ENCODE measurements at regions of chr1 and their contacts with region 1.

Region 1: DNA sequence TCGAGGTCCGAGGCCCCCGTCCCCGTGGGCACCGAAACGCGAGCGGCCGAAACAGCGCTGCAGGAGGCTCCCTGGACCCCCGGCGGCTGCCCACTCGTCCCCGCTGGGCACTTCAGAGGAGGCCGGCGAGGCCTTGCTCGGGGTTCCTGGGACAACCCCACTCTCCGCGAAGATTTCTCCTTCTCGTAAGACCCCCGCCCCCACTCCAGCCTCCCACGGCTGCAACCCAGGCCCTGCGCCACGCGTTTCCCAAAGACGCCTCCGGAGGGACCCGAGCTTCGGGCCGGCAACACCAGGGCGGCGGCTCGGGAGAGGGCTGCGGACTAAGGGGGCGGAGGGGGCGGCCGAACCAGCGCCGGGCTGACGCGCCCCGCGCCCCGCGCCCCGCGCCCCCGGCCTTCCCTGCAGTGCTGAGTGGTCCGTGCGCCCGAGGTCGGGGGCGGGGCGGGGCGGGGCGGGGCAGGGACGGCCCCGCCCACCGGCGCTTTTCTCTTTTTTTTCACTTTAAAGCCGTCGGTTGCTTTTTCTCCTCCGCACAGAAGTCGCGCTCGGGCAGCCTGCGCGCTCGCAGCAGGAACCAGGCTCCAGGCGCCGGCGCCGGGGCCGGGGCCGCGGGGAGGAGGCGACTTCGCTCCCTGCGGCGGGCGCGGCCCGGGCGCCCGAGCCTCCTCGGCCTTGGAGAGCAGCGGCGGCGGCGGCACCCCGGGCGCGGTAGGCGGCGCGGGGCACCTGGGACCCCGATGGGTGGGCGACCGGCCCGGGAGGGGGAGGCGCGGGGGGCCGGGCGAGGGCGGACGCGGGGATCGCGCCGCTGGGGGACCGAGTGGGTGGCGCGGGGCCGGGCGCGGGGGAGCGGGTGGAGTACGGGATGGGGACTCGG is at the start of gene SPSB1:
- DNase-seq: peak; percentile 84
- ATAC-seq: peak; percentile 40
- H3K4me3 Mint-ChIP-seq: peak within 1 kb of the TSS; percentile 39
- H3K27ac Mint-ChIP-seq: no peak within 1 kb of the TSS
- H3K4me1 Mint-ChIP-seq: peaks cover 11% of the 10 kb centered on the region
- H3K27me3 Mint-ChIP-seq: no peaks in the 10 kb centered on the region
- total RNA-seq, gene SPSB1: 5.7 to 6.8 TPM

Region 2: GRCh38 chr1:8482979-8483391 is 809.6 kb before region 1 on chr1:
- CTCF ChIA-PET with region 1: no interaction called
- POLR2A ChIA-PET with region 1: no interaction called
- intact Hi-C with region 1: no loop called
- DNase-seq: no peak
- ATAC-seq: no peak
- H3K4me3 Mint-ChIP-seq: no peak overlapping the region
- H3K27ac Mint-ChIP-seq: no peak overlapping the region
- H3K4me1 Mint-ChIP-seq: peaks cover 9% of the 10 kb centered on the region
- H3K27me3 Mint-ChIP-seq: no peaks in the 10 kb centered on the region

Region 3: DNA sequence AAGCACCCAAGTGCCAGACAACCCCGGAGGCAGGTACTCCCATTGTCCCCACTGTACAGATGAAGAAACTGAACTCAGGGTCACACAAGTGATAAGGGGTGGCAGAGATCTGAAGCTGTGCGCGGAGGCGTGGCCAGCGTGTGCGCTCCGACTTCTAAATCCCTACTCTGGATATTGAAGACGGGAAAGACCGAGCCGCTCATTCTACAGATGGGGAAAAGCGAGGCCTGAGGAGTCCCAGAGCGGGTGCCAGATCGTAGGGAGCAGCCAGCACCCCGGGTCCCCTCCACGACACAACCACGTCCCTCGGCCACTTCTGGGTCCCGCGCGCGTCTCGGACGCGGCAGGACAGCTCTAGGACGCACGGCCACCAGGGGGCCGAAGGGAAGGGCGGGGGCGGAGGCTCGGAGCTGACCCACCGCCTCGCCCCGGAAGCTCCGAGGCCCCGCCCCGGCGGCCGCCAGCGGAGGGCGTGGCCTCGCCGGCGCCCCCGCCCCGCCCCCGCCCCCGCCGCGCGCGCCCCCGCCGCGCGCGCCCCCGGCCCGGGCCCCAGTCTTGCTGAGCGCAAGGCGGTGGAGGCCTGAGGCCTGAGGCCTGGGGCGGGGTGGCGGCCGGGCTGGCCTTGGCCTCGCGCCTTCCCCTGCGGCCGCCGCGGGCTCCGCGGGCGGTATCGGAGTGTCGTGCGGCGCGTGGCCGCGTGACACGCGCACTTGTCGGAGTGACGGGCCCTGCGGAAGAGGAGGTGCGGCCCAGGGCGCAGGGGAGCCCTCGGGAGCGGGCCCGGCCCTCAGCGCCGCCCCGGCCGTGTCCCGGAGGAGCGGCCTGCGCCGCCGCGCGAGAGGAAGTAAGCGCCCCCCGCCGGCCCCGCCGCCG is 58.1 kb before region 1 on chr1 and contains the start of gene H6PD:
- CTCF ChIA-PET with region 1: interaction called, 4 read pairs
- POLR2A ChIA-PET with region 1: no interaction called
- intact Hi-C with region 1: loop called in 1 of 2 experiments (anchors 1 kb)
- DNase-seq: peak; percentile 80
- ATAC-seq: peak; percentile 76
- H3K4me3 Mint-ChIP-seq: peak within 1 kb of the TSS; percentile 82
- H3K27ac Mint-ChIP-seq: peak within 1 kb of the TSS; percentile 90
- H3K4me1 Mint-ChIP-seq: peaks cover 41% of the 10 kb centered on the region
- H3K27me3 Mint-ChIP-seq: no peaks in the 10 kb centered on the region
- total RNA-seq, gene H6PD: 8.8 to 9.6 TPM

Region 4: GRCh38 chr1:9281908-9282695 is 10.5 kb before region 1 on chr1:
- CTCF ChIA-PET with region 1: interaction called, 21 read pairs
- POLR2A ChIA-PET with region 1: interaction called, 3 read pairs
- intact Hi-C with region 1: loop called in 1 of 2 experiments (anchors 1 kb)
- DNase-seq: peak; percentile 27
- ATAC-seq: no peak
- H3K4me3 Mint-ChIP-seq: no peak overlapping the region
- H3K27ac Mint-ChIP-seq: no peak overlapping the region
- H3K4me1 Mint-ChIP-seq: peaks cover 43% of the 10 kb centered on the region
- H3K27me3 Mint-ChIP-seq: no peaks in the 10 kb centered on the region

Region 5: GRCh38 chr1:9428601-9429341 is 136.2 kb after region 1 on chr1:
- CTCF ChIA-PET with region 1: interaction called, 4 read pairs
- POLR2A ChIA-PET with region 1: interaction called, 5 read pairs
- intact Hi-C with region 1: loop called in 1 of 2 experiments (anchors 1 kb)
- DNase-seq: peak; percentile 100
- ATAC-seq: peak; percentile 91
- H3K4me3 Mint-ChIP-seq: peak overlapping the region; percentile 86
- H3K27ac Mint-ChIP-seq: peak overlapping the region; percentile 98
- H3K4me1 Mint-ChIP-seq: peaks cover 47% of the 10 kb centered on the region
- H3K27me3 Mint-ChIP-seq: no peaks in the 10 kb centered on the region

Region 6: GRCh38 chr1:9494929-9495758 is 202.5 kb after region 1 on chr1:
- CTCF ChIA-PET with region 1: interaction called, 79 read pairs
- POLR2A ChIA-PET with region 1: no interaction called
- intact Hi-C with region 1: loop called (anchors 1 kb)
- DNase-seq: peak; percentile 84
- ATAC-seq: peak; percentile 90
- H3K4me3 Mint-ChIP-seq: peak overlapping the region; percentile 57
- H3K27ac Mint-ChIP-seq: no peak overlapping the region
- H3K4me1 Mint-ChIP-seq: peaks cover 7% of the 10 kb centered on the region
- H3K27me3 Mint-ChIP-seq: peaks cover 7% of the 10 kb centered on the region

Region 7: GRCh38 chr1:9823943-9824701 is 531.5 kb after region 1 on chr1 and contains the start of gene CLSTN1:
- CTCF ChIA-PET with region 1: no interaction called
- POLR2A ChIA-PET with region 1: no interaction called
- intact Hi-C with region 1: loop called in 1 of 2 experiments (anchors 5 kb)
- DNase-seq: peak; percentile 96
- ATAC-seq: peak; percentile 72
- H3K4me3 Mint-ChIP-seq: peak within 1 kb of the TSS; percentile 96
- H3K27ac Mint-ChIP-seq: peak within 1 kb of the TSS; percentile 89
- H3K4me1 Mint-ChIP-seq: peaks cover 35% of the 10 kb centered on the region
- H3K27me3 Mint-ChIP-seq: peaks cover 9% of the 10 kb centered on the region
- total RNA-seq, gene CLSTN1: 34.9 to 36.7 TPM

Region 8: GRCh38 chr1:9929431-9930385 is 637.1 kb after region 1 on chr1:
- CTCF ChIA-PET with region 1: no interaction called
- POLR2A ChIA-PET with region 1: no interaction called
- intact Hi-C with region 1: no loop called
- DNase-seq: no peak
- ATAC-seq: no peak
- H3K4me3 Mint-ChIP-seq: no peak overlapping the region
- H3K27ac Mint-ChIP-seq: no peak overlapping the region
- H3K4me1 Mint-ChIP-seq: no peaks in the 10 kb centered on the region
- H3K27me3 Mint-ChIP-seq: no peaks in the 10 kb centered on the region